Mammary epithelial cell (primary cell): ENCODE measurements at regions of chr15 and their contacts with region 1.

Region 1: GRCh38 chr15:70210528-70210927 is 112.8 kb upstream of the TLE3 start:
- DNase-seq: no peak
- H3K4me3 ChIP-seq: no peak overlapping the region
- H3K27ac ChIP-seq: no peak overlapping the region
- H3K4me1 ChIP-seq: no peaks in the 10 kb centered on the region
- H3K27me3 ChIP-seq: no peaks in the 10 kb centered on the region
- CTCF ChIP-seq: peak in 1 of 2 donors; percentile 5

Region 2: DNA sequence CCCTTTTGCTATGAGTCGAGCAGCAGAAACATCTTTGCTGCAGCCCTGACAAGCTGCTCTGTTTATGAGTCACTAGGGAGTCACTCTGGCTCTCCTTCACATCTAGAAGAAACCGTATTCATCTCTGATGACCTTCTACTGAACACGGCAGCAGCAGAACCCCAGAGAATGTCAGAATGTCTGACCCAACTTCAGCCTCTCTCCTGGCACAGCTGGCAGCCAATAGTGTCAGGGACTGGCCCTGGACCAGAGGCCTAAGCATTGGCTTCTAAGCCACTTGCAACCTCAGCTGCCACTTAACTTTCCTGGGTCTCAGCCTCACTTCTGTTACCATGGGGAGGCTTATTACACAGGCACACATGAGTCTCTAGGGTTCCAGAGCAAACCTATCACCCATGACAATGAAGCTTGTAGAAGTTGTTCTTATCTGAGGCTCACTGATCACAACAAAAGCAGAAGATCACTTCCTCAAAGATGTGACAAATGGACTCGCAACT is 71.3 kb after region 1 on chr15:
- CTCF ChIA-PET with region 1: no interaction called
- dilution Hi-C with region 1: loop called (anchors 5 kb)
- in situ Hi-C with region 1: no loop called
- intact Hi-C with region 1: no loop called
- DNase-seq: peak; percentile 57
- H3K4me3 ChIP-seq: no peak overlapping the region
- H3K27ac ChIP-seq: no peak overlapping the region
- H3K4me1 ChIP-seq: no peaks in the 10 kb centered on the region
- H3K27me3 ChIP-seq: no peaks in the 10 kb centered on the region
- CTCF ChIP-seq: no peak